ENCODE measurements at regions of chr7 and their contacts with region 1.

Region 1: DNA sequence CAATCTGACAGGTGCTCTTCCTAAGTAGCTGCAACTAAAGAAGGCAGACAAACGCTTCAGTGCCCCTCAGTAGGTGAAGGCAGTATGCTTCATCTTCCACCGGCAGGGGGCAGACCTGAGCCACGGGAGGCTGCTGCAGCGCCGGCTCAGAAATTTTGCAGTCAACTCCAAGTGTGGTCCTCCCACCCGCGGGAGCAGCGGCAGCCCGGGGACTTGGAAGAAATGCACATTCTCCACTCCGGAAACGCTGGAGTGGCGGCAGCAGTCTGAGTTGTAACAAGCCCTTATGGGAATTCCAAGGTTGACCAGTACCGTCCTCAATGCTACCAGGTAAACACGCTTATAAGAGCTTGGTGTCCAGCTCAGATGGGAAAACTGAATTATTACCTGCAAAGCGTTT is 3.4 kb downstream of the IGFBP3 start:
- DNase-seq: peak; percentile 57
- H3K4me3 Mint-ChIP-seq: no peak overlapping the region
- H3K27ac Mint-ChIP-seq: no peak overlapping the region
- H3K4me1 Mint-ChIP-seq: peaks cover 18% of the 10 kb centered on the region
- H3K27me3 Mint-ChIP-seq: peaks cover 36% of the 10 kb centered on the region

Region 2: DNA sequence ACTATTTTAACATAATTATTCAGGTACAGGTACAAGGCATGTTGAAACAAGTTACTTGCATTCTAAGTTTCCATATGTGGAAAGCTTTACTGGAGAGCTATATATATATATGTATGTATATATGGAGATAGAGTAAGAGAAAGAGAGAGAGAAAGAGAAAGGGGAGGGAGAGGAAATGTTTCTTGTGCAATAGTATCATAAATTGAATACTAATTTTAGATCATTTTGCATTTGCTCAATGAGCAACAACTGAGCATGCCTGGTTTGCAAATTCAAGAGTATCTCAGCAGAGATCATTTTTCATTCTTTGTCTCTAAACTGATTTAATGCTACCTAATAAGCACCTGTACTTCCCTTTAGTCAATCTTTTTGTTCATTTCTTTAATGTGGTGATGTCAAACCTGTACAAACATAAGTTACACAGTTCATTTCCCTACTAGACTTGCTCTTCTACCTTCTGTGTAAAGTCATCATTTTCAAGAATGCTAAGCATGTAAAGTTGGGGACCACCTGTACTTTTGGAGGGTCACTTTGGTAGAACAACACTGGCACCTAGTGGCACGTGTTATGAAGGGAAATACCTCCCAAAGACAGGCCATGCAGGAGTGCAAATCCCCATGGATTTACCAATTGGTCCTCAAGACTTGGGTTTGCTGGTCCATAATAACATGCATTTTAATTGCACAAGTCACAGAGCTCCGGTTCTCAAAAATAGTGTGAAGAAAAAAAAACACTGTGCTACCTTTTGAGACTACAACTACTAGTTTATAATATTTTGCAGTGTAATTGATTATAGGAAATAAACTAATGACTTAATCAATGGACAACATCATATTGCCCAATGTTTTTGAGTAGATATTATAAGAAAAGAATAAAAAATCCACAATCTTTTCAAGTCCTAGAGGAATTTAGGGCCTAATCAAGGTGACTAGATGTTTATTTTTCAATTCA is 434.6 kb after region 1 on chr7:
- intact Hi-C with region 1: loop called (anchors 5 kb)
- DNase-seq: no peak
- H3K4me3 Mint-ChIP-seq: no peak overlapping the region
- H3K27ac Mint-ChIP-seq: no peak overlapping the region
- H3K4me1 Mint-ChIP-seq: no peaks in the 10 kb centered on the region
- H3K27me3 Mint-ChIP-seq: no peaks in the 10 kb centered on the region

Region 3: DNA sequence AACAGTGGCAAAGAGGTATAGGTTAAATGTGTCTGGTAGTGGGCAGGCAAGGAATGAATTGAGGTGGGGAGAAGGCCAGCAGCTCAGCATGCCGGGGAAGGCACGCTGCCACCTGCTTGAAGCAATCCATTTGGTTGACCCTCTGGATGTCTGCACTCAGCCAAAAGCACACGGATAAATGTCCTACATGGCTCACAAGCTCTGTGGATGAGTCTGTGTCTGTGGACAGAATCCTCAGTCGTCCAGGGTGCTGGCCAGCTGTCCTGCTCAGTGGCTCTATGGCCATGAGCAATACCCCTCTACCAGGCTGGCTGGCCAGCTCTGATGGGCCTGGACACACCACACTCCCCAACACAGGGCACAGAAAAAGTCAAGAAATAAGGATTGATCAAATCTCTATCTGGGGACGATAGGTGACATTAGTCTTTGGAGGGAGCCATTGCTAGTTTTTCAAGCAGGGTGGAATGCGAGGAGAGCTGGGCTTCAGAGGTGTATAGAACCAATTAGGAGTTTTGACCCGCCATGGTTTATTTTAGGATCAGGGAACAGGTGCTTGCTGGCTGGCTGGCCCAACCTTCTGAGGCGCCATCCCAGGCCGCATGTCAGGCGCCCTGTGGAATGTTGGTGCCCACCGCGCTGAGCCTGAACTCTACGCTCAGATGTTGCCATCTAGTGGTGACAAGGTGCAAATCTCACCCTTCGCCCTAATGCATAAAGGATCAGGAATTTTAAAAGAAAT is 1170.8 kb after region 1 on chr7:
- intact Hi-C with region 1: loop called (anchors 1 kb)
- DNase-seq: no peak
- H3K4me3 Mint-ChIP-seq: no peak overlapping the region
- H3K27ac Mint-ChIP-seq: no peak overlapping the region
- H3K4me1 Mint-ChIP-seq: no peaks in the 10 kb centered on the region
- H3K27me3 Mint-ChIP-seq: no peaks in the 10 kb centered on the region

Region 4: GRCh38 chr7:47818796-47819606 is 1901.3 kb after region 1 on chr7:
- intact Hi-C with region 1: loop called (anchors 5 kb)
- DNase-seq: peak; percentile 14
- H3K4me3 Mint-ChIP-seq: no peak overlapping the region
- H3K27ac Mint-ChIP-seq: no peak overlapping the region
- H3K4me1 Mint-ChIP-seq: no peaks in the 10 kb centered on the region
- H3K27me3 Mint-ChIP-seq: peaks cover 2% of the 10 kb centered on the region